Mammary epithelial cell (primary cell): ENCODE measurements at regions of chr4 and their contacts with region 1.

Region 1: DNA sequence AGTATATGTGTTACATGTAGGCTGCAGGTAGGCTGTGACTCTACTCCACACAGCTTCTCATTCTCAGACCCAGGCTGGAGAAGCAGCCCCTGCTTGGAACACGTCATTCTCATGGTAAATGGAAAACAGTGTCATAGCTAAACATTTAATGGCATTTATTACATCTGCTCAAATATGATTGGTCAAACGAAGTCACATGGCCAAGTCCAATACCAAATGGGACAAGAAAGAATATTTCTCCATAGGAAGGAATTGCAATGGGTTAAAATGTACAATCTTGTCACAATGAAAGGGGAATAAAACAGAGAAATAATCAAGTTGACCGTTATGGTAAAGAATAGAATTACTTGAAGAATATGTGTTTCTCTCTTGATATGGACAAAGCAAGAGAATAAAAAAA is 198.6 kb downstream of the ANAPC10 start:
- DNase-seq: no peak
- H3K4me3 ChIP-seq: no peak overlapping the region
- H3K27ac ChIP-seq: no peak overlapping the region
- H3K4me1 ChIP-seq: peaks cover 22% of the 10 kb centered on the region
- H3K27me3 ChIP-seq: no peaks in the 10 kb centered on the region
- CTCF ChIP-seq: no peak

Region 2: GRCh38 chr4:144910723-144911122 is 11.3 kb after region 1 on chr4:
- CTCF ChIA-PET with region 1: no interaction called
- dilution Hi-C with region 1: no loop called
- in situ Hi-C with region 1: no loop called
- intact Hi-C with region 1: no loop called
- DNase-seq: no peak
- H3K4me3 ChIP-seq: no peak overlapping the region
- H3K27ac ChIP-seq: no peak overlapping the region
- H3K4me1 ChIP-seq: peaks cover 13% of the 10 kb centered on the region
- H3K27me3 ChIP-seq: no peaks in the 10 kb centered on the region
- CTCF ChIP-seq: no peak

Region 3: GRCh38 chr4:144985531-144985930 is 86.1 kb after region 1 on chr4:
- CTCF ChIA-PET with region 1: no interaction called
- dilution Hi-C with region 1: loop called (anchors 5 kb)
- in situ Hi-C with region 1: no loop called
- intact Hi-C with region 1: no loop called
- DNase-seq: no peak
- H3K4me3 ChIP-seq: no peak overlapping the region
- H3K27ac ChIP-seq: no peak overlapping the region
- H3K4me1 ChIP-seq: peaks cover under 1% of the 10 kb centered on the region
- H3K27me3 ChIP-seq: no peaks in the 10 kb centered on the region
- CTCF ChIP-seq: no peak